CD8-positive, alpha-beta T cell (primary cell): ENCODE measurements at regions of chr16 and their contacts with region 1.

Region 1: GRCh38 chr16:25014500-25015147 is 545 bp downstream of the ARHGAP17 start:
- DNase-seq: peak in 6 of 9 experiments; percentile 19 to 55 (median 31)
- ATAC-seq: peak; percentile 41
- H3K4me3 ChIP-seq: peak overlapping the region; percentile 65 to 73
- H3K4me3 Mint-ChIP-seq: peak overlapping the region; percentile 93
- H3K27ac ChIP-seq: peak overlapping the region; percentile 75 to 83
- H3K27ac Mint-ChIP-seq: peak overlapping the region; percentile 96
- H3K4me1 ChIP-seq: peaks cover 51% of the 10 kb centered on the region
- H3K4me1 Mint-ChIP-seq: peaks cover 70% of the 10 kb centered on the region
- H3K27me3 ChIP-seq: no peaks in the 10 kb centered on the region
- H3K27me3 Mint-ChIP-seq: no peaks in the 10 kb centered on the region
- CTCF ChIP-seq: no peak

Region 2: DNA sequence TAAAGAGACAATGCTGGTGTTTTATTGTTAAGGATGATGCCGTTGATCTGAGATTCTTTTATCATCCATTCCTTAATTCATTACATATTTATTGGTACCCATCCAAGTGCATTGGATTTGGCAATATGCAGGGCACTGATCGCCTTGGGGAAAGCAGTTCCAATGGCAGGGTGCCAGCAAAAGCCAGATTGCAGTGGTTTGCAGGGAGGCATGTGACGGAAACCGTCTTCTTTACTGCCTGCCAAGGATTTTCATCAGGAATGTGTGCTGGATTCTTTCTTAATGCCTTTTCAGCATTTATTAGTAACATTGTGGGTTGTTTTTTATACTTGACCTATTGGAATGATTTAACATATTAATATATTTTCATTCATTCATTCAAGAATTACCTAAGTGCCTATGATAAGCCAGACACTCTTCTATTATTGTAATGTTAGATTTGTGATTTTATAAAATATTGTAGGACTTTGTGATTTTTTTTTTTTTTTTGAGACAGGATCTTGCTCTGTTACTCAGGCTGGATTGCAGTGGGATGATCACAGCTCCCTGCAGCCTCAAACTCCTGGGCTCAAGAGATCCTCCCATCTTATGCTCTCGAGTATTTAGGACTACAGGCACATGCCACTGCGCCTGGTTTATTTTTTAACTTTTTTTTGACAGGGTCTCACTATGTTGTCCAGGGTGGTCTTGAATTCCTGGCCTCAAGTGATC is 378.6 kb before region 1 on chr16:
- CTCF ChIA-PET with region 1: no interaction called
- POLR2A ChIA-PET with region 1: no interaction called
- intact Hi-C with region 1: no loop called
- DNase-seq: no peak
- ATAC-seq: no peak
- H3K4me3 ChIP-seq: no peak overlapping the region
- H3K4me3 Mint-ChIP-seq: no peak overlapping the region
- H3K27ac ChIP-seq: no peak overlapping the region
- H3K27ac Mint-ChIP-seq: no peak overlapping the region
- H3K4me1 ChIP-seq: no peaks in the 10 kb centered on the region
- H3K4me1 Mint-ChIP-seq: no peaks in the 10 kb centered on the region
- H3K27me3 ChIP-seq: peaks cover 0 to 2% of the 10 kb centered on the region in 2 experiments
- H3K27me3 Mint-ChIP-seq: peaks cover 16% of the 10 kb centered on the region
- CTCF ChIP-seq: no peak

Region 3: GRCh38 chr16:24896439-24896838 is 118.2 kb before region 1 on chr16:
- CTCF ChIA-PET with region 1: no interaction called
- POLR2A ChIA-PET with region 1: no interaction called
- intact Hi-C with region 1: no loop called
- DNase-seq: no peak
- ATAC-seq: no peak
- H3K4me3 ChIP-seq: no peak overlapping the region
- H3K4me3 Mint-ChIP-seq: no peak overlapping the region
- H3K27ac ChIP-seq: no peak overlapping the region
- H3K27ac Mint-ChIP-seq: no peak overlapping the region
- H3K4me1 ChIP-seq: no peaks in the 10 kb centered on the region
- H3K4me1 Mint-ChIP-seq: no peaks in the 10 kb centered on the region
- H3K27me3 ChIP-seq: no peaks in the 10 kb centered on the region
- H3K27me3 Mint-ChIP-seq: peaks cover 4% of the 10 kb centered on the region
- CTCF ChIP-seq: no peak

Region 4: DNA sequence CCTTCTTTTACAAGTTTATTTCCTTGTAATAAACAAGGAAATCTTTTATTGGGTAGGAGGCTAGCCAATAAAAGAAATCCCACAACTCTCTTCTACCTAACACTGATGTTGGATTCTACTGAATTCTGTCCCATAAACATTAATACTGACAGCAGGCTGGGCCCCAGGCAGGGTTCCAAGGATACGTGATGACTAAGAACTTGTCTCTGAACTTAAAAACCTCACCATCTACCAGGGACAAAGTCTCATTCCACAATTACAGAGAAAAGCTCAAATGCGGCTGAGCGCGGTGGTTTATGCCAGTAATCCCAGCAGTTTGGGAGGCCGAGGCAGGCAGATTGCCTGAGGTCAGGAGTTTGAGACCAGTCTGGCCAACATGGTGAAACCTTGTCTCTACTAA is 64.3 kb before region 1 on chr16:
- CTCF ChIA-PET with region 1: no interaction called
- POLR2A ChIA-PET with region 1: no interaction called
- intact Hi-C with region 1: no loop called
- DNase-seq: peak in 1 of 9 experiments; percentile 4
- ATAC-seq: no peak
- H3K4me3 ChIP-seq: no peak overlapping the region
- H3K4me3 Mint-ChIP-seq: no peak overlapping the region
- H3K27ac ChIP-seq: no peak overlapping the region
- H3K27ac Mint-ChIP-seq: no peak overlapping the region
- H3K4me1 ChIP-seq: no peaks in the 10 kb centered on the region
- H3K4me1 Mint-ChIP-seq: no peaks in the 10 kb centered on the region
- H3K27me3 ChIP-seq: no peaks in the 10 kb centered on the region
- H3K27me3 Mint-ChIP-seq: no peaks in the 10 kb centered on the region
- CTCF ChIP-seq: no peak

Region 5: DNA sequence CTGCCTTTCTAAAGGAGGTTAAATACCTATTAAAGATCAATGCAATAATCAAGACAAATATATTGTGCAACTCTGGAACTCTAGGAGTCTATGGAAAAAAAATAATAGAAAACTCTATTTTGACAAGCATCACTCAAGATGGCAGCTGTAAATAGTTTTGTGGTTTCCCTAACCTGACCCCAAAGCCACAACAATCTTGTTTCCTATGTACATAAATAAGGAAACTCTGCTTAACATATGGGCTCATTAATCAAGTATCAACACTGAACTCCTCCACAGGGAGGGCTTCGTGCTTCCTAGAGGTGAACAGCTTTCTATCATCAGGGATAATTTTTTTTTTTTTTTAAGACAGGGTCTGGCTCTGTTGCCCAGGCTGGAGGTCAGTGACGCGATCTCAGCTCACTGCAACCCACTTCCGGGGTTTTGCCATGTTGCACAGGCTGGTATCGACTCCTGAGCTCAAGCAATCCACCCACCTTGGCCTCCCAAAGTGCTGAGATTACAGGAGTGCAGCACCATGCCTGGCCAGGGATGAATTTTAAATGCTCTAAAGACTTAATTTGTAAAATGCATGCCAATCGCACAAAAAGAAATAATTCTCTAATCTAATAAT is 41.9 kb before region 1 on chr16:
- CTCF ChIA-PET with region 1: no interaction called
- POLR2A ChIA-PET with region 1: no interaction called
- intact Hi-C with region 1: loop called in 1 of 2 experiments (anchors 5 kb)
- DNase-seq: peak in 3 of 9 experiments; percentile 38 to 66 (median 45)
- ATAC-seq: no peak
- H3K4me3 ChIP-seq: no peak overlapping the region
- H3K4me3 Mint-ChIP-seq: no peak overlapping the region
- H3K27ac ChIP-seq: peak overlapping the region in 1 of 2 experiments; percentile 32
- H3K27ac Mint-ChIP-seq: peak overlapping the region; percentile 29
- H3K4me1 ChIP-seq: peaks cover 9% of the 10 kb centered on the region
- H3K4me1 Mint-ChIP-seq: peaks cover 36% of the 10 kb centered on the region
- H3K27me3 ChIP-seq: no peaks in the 10 kb centered on the region
- H3K27me3 Mint-ChIP-seq: no peaks in the 10 kb centered on the region
- CTCF ChIP-seq: no peak

Region 6: GRCh38 chr16:25051406-25052150 is 37.0 kb after region 1 on chr16:
- CTCF ChIA-PET with region 1: interaction called, 6 read pairs
- POLR2A ChIA-PET with region 1: interaction called, 32 read pairs
- intact Hi-C with region 1: loop called (anchors 1 kb)
- DNase-seq: peak in 1 of 9 experiments; percentile 15
- ATAC-seq: no peak
- H3K4me3 ChIP-seq: no peak overlapping the region
- H3K4me3 Mint-ChIP-seq: peak overlapping the region; percentile 36
- H3K27ac ChIP-seq: peak overlapping the region in 1 of 2 experiments; percentile 88
- H3K27ac Mint-ChIP-seq: peak overlapping the region; percentile 79
- H3K4me1 ChIP-seq: peaks cover 44% of the 10 kb centered on the region
- H3K4me1 Mint-ChIP-seq: peaks cover 50% of the 10 kb centered on the region
- H3K27me3 ChIP-seq: no peaks in the 10 kb centered on the region
- H3K27me3 Mint-ChIP-seq: no peaks in the 10 kb centered on the region
- CTCF ChIP-seq: no peak

Region 7: GRCh38 chr16:25066747-25067631 is 52.4 kb after region 1 on chr16:
- CTCF ChIA-PET with region 1: no interaction called
- POLR2A ChIA-PET with region 1: interaction called, 16 read pairs
- intact Hi-C with region 1: loop called in 1 of 2 experiments (anchors 1 kb)
- DNase-seq: peak; percentile 63 to 92 (median 82)
- ATAC-seq: peak; percentile 97
- H3K4me3 ChIP-seq: peak overlapping the region; percentile 65 to 70
- H3K4me3 Mint-ChIP-seq: peak overlapping the region; percentile 95
- H3K27ac ChIP-seq: peak overlapping the region; percentile 61 to 86
- H3K27ac Mint-ChIP-seq: peak overlapping the region; percentile 97
- H3K4me1 ChIP-seq: peaks cover 42% of the 10 kb centered on the region
- H3K4me1 Mint-ChIP-seq: peaks cover 59% of the 10 kb centered on the region
- H3K27me3 ChIP-seq: no peaks in the 10 kb centered on the region
- H3K27me3 Mint-ChIP-seq: no peaks in the 10 kb centered on the region
- CTCF ChIP-seq: no peak

Region 8: GRCh38 chr16:25257504-25257955 is 242.9 kb after region 1 on chr16 and contains the start of gene ZKSCAN2:
- CTCF ChIA-PET with region 1: no interaction called
- POLR2A ChIA-PET with region 1: interaction called, 3 read pairs
- intact Hi-C with region 1: loop called in 1 of 2 experiments (anchors 2 kb)
- DNase-seq: peak; percentile 57 to 90 (median 77)
- ATAC-seq: peak; percentile 79
- H3K4me3 ChIP-seq: peak within 1 kb of the TSS; percentile 68 to 86
- H3K4me3 Mint-ChIP-seq: peak within 1 kb of the TSS; percentile 96
- H3K27ac ChIP-seq: peak within 1 kb of the TSS; percentile 79 to 94
- H3K27ac Mint-ChIP-seq: peak within 1 kb of the TSS; percentile 95
- H3K4me1 ChIP-seq: peaks cover 38% of the 10 kb centered on the region
- H3K4me1 Mint-ChIP-seq: peaks cover 62% of the 10 kb centered on the region
- H3K27me3 ChIP-seq: no peaks in the 10 kb centered on the region
- H3K27me3 Mint-ChIP-seq: no peaks in the 10 kb centered on the region
- CTCF ChIP-seq: no peak
- total RNA-seq, gene ZKSCAN2: 9.3 to 9.4 TPM